G401 (cell line): ENCODE measurements at regions of chr16 and their contacts with region 1.

Region 1: GRCh38 chr16:58533751-58534470 is 18.6 kb downstream of the SETD6 start:
- DNase-seq: peak; percentile 18

Region 2: DNA sequence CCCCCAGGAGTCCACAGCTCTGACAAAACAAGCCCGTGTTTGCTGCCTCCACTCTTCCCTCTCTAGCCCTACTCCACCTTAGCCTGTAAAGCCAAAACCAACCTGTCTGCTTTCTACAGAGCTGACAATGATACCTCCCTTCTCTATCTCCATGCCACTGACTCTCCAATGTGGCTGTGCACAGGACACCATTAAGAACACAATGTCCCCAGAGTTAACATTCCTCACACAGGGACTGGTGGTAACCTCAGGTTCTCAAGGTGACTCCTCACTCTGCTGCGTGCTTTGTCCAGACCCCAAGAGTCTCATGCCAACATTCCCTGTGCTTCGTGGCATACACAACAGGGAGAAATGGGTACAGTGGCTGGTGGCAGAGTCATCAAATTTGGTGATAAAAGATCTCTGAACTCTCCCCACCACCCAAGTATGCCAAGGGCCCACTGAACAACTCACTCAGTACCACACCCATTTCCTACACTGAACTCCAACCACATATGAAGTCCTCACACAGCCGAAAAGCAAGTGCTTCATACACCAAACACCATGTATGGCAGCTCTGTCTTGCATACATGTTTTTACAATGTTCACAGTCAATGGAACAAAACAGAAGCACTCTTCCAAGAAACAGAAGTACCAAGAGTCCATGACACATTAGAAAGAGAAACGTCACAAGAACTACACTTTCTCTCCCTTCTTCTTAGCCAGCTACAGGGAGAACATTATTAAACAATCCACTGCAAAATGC is 357.1 kb before region 1 on chr16:
- in situ Hi-C with region 1: no loop called
- DNase-seq: no peak

Region 3: GRCh38 chr16:58494981-58495520 is 38.9 kb before region 1 on chr16:
- in situ Hi-C with region 1: no loop called
- DNase-seq: peak; percentile 100

Region 4: GRCh38 chr16:58589326-58589905 is 55.5 kb after region 1 on chr16:
- in situ Hi-C with region 1: loop called (anchors 5 kb)
- DNase-seq: no peak

Region 5: GRCh38 chr16:58629572-58630104 is 95.7 kb after region 1 on chr16 and contains the start of gene CNOT1:
- in situ Hi-C with region 1: loop called (anchors 10 kb)
- DNase-seq: peak; percentile 99
- total RNA-seq, gene CNOT1: 179 and 273 TPM in 2 replicates